Endothelial cell of umbilical vein (primary cell): ENCODE measurements at regions of chr16 and their contacts with region 1.

Region 1: GRCh38 chr16:85172455-85173145 is 60.3 kb upstream of the CIBAR2 start:
- DNase-seq: peak; percentile 71
- H3K4me3 ChIP-seq: peak overlapping the region in 2 of 3 experiments; percentile 15 to 39
- H3K27ac ChIP-seq: peak overlapping the region; percentile 93
- H3K4me1 ChIP-seq: peaks cover 59% of the 10 kb centered on the region
- H3K27me3 ChIP-seq: no peaks in the 10 kb centered on the region
- CTCF ChIP-seq: peak; percentile 48 to 56
- POLR2A ChIP-seq: no peak

Region 2: DNA sequence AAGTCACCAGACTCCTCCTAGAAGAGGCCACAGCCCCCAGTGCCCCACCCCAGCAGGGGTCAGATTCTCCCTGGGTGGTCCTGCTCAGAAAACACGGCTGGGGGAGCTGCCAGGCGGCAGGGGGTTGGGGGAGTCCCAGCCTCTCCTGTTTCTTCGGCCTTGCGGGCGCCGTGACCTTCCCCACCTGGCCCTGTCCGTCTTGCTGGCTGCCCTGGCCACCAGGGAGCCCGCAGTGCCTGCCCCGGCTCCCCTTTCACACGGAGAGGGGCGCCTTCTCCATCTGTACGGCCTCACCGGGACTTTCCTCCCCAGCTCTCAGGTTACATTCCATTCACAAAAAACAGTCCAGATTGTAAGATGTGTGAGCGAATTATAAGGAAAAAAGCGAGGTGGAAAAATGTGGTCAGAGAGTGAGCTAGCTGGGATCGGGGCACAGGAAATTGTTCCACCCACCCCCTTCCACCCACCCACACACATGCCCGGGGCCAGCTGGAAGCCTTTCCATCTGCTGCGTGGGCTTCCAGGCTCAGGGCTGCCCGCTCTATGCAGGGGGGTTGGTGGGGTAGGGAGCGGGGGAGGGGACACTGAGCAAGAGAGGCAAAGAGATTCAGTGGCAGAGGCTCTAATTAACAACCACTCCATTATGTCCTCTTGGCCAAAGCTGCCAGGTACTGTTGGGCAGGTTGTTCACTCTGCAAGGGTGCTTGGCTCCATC is 45.7 kb before region 1 on chr16:
- CTCF ChIA-PET with region 1: interaction called, 27 read pairs
- POLR2A ChIA-PET with region 1: no interaction called
- dilution Hi-C with region 1: no loop called
- intact Hi-C with region 1: loop called (anchors 2 kb)
- DNase-seq: peak; percentile 88
- H3K4me3 ChIP-seq: no peak overlapping the region
- H3K27ac ChIP-seq: no peak overlapping the region
- H3K4me1 ChIP-seq: peaks cover 28% of the 10 kb centered on the region
- H3K27me3 ChIP-seq: no peaks in the 10 kb centered on the region
- CTCF ChIP-seq: no peak
- POLR2A ChIP-seq: no peak

Region 3: DNA sequence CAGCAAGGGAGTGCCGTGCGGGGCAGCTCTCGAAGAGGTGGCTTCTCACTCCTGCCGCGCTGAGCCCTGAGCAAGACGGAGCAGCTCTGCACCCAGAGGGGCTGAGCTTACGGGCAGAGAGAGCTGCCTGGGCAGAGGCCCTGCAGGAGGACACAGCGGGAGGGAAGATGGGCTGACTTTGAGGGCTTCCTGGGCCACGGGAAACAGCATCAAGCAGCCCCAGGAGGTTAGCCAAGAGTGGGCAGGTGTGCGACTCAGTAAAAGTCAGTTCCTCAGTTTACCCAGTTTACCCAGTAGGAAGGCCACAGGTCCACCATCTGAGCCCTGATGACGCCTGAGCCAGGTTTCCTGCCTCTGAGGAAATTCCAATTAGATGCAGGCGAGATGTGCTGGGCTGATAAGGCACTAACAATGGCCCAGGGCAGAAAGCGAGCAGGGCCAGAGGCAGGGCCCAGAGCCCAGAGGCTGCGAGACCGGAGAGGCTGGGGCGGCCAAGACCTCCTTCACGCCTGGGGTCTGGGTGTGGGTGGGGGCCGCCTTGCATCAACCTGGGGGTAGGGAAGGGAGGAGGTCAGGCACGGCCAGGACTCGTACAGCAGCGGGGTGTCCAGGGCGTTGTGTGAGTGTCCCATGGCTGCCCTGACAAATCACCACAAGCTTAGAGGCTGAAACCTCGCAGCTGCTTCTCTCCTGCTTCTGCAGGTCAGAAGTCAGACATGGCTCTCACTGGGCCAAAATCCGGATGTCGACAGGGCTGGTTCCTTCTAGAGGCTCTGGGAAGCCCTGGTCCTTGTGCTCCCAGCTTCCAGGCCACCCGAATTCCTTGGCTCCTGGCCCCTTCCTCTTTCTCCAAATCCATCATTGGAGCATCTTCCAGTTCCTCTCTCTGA is 28.3 kb before region 1 on chr16:
- CTCF ChIA-PET with region 1: interaction called, 11 read pairs
- POLR2A ChIA-PET with region 1: no interaction called
- dilution Hi-C with region 1: no loop called
- intact Hi-C with region 1: loop called (anchors 1 kb)
- DNase-seq: peak; percentile 79
- H3K4me3 ChIP-seq: no peak overlapping the region
- H3K27ac ChIP-seq: peak overlapping the region; percentile 89
- H3K4me1 ChIP-seq: peaks cover 27% of the 10 kb centered on the region
- H3K27me3 ChIP-seq: no peaks in the 10 kb centered on the region
- CTCF ChIP-seq: no peak
- POLR2A ChIP-seq: peak; percentile 46

Region 4: DNA sequence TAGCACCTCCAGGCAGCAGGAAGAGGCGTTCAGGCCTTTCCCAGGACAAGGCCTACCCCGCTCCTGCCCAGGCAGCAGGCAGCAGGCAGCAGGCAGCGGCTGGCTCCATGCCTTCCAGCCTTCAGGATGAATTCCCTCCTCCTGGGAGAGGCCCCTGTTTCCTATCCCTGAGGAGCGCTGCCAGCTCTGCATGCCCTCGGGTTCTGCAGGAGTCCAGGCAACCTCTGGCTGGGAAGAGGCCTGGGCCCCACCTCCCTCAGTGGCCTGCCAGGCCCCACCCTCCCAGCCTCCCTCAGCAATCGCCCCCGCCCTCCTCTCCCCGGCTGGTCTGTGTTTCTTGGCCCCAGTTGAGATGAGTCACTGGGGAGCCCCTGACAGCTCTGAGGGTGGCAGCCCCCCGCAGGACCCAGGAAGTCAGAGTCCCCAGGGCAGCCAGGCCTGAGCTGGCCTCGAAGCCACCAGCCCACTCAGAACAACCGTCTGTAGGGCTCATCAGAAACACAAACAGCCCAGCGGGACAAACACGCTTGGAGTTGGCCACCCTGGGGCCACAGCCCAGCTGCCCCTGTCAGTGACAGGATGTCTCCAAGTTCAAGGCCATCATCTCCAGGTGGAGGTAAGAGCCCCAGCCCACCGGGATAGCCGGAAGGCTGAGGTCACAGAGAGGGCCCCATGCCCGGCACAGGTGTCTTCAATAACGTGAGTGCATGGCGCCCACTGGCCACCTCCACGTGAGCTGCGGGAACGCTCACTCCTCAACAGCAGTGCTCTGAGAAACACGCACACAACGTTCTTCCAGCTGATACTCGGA is 20.8 kb before region 1 on chr16:
- CTCF ChIA-PET with region 1: interaction called, 11 read pairs
- POLR2A ChIA-PET with region 1: no interaction called
- dilution Hi-C with region 1: no loop called
- intact Hi-C with region 1: no loop called
- DNase-seq: peak; percentile 62
- H3K4me3 ChIP-seq: no peak overlapping the region
- H3K27ac ChIP-seq: no peak overlapping the region
- H3K4me1 ChIP-seq: peaks cover 12% of the 10 kb centered on the region
- H3K27me3 ChIP-seq: no peaks in the 10 kb centered on the region
- CTCF ChIP-seq: no peak
- POLR2A ChIP-seq: no peak

Region 5: DNA sequence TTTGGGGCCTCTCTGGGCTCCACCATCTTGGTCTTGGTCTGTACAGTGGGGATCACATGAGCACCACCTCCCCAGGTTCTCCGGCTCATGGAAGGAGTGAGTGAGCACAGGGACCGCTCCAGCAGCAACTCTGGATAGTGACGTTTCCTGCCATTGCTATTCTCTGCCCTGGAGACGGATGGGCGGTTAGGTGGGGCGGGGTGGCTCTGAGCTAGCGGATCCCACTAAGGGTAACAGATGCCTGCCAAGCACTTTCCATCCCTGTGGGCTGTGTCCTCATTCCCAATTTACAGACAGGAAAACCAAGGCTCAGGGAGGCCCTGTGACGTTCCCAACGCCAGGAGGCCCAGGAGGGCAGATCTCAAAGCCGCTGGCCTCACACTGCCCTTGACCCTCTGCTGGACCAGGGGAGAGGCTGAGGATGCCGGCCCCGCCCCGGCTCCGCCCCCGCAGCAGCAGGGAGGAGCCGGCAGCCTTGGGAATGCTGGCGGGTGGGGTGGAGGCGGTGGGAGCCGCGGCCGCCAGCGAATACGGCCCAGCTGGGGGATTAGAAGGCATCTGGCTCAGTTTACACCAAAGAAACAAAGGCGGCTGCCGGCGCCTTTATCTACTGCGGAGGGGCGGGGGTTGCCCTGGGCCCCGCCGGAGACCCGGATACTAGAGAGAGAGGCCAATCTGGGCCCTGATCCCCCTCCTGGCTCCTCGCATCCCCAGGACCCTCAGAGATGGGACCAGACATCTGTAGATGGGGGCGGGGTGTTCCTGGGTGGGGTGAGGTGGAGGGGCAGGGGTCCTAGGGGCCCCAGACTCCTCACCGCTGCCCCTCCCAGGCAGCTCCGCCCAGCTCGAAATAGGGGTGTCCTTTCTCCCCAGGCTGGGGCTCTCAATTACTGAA is 62.0 kb after region 1 on chr16:
- CTCF ChIA-PET with region 1: interaction called, 21 read pairs
- POLR2A ChIA-PET with region 1: no interaction called
- dilution Hi-C with region 1: no loop called
- intact Hi-C with region 1: loop called (anchors 1 kb)
- DNase-seq: peak; percentile 69
- H3K4me3 ChIP-seq: peak overlapping the region in 2 of 3 experiments; percentile 49 to 56
- H3K27ac ChIP-seq: peak overlapping the region; percentile 40
- H3K4me1 ChIP-seq: peaks cover 14% of the 10 kb centered on the region
- H3K27me3 ChIP-seq: no peaks in the 10 kb centered on the region
- CTCF ChIP-seq: no peak
- POLR2A ChIP-seq: no peak

Region 6: DNA sequence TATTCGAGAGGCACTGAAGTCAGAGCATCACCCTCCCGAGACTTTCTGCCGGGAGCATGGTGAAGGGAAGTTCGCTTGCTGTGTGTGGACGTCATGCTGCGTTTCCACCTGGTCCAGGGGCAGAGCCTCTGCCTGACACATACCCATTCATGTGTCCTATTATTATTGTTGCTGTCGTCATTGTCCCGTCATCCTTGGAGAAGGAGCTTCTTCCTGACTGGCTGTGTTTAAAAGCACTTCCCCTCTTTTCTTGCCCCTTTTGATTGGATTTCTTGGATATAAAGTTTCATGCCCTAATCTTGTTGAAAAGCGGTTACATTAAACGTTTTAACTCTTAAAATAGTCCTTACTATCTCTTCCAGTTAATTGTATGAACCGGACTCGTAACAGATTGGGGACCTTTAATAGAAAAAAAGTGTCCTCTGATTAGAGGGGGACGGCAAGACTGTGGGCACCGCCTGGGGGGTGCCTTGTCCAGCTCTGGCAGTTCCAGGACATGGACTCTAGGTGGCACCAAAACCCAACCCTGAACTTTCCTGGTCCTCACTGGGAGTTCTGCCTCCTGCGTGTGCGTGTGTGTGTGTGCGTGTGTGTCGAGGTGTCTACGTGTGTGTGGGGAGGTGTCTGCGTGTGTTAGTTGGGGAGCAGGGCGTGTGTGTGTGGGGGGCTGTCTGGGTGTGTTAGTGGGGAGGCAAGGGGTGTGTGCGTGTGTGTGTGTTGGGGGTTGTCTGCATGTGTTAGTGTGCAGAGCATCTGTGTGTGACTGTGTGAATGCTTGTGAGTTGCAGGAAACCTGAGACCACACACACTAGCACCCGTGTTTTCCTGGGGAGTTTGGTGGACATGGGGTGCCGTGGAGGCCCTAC is 72.9 kb after region 1 on chr16:
- CTCF ChIA-PET with region 1: interaction called, 5 read pairs
- POLR2A ChIA-PET with region 1: no interaction called
- dilution Hi-C with region 1: no loop called
- intact Hi-C with region 1: loop called (anchors 2 kb)
- DNase-seq: peak; percentile 53
- H3K4me3 ChIP-seq: no peak overlapping the region
- H3K27ac ChIP-seq: no peak overlapping the region
- H3K4me1 ChIP-seq: no peaks in the 10 kb centered on the region
- H3K27me3 ChIP-seq: no peaks in the 10 kb centered on the region
- CTCF ChIP-seq: peak; percentile 83 to 92
- POLR2A ChIP-seq: no peak

Region 7: GRCh38 chr16:85253084-85253941 is 80.7 kb after region 1 on chr16:
- CTCF ChIA-PET with region 1: interaction called, 23 read pairs
- POLR2A ChIA-PET with region 1: interaction called, 3 read pairs
- dilution Hi-C with region 1: no loop called
- intact Hi-C with region 1: no loop called
- DNase-seq: peak; percentile 28
- H3K4me3 ChIP-seq: no peak overlapping the region
- H3K27ac ChIP-seq: no peak overlapping the region
- H3K4me1 ChIP-seq: no peaks in the 10 kb centered on the region
- H3K27me3 ChIP-seq: no peaks in the 10 kb centered on the region
- CTCF ChIP-seq: peak; percentile 92 to 97
- POLR2A ChIP-seq: no peak

Region 8: GRCh38 chr16:85305996-85306792 is 133.6 kb after region 1 on chr16:
- CTCF ChIA-PET with region 1: no interaction called
- POLR2A ChIA-PET with region 1: no interaction called
- dilution Hi-C with region 1: no loop called
- intact Hi-C with region 1: no loop called
- DNase-seq: peak; percentile 92
- H3K4me3 ChIP-seq: no peak overlapping the region
- H3K27ac ChIP-seq: no peak overlapping the region
- H3K4me1 ChIP-seq: peaks cover 14% of the 10 kb centered on the region
- H3K27me3 ChIP-seq: no peaks in the 10 kb centered on the region
- CTCF ChIP-seq: no peak
- POLR2A ChIP-seq: no peak